HCT116 (cell line): ENCODE measurements at regions of chr1 and their contacts with region 1.

Region 1: DNA sequence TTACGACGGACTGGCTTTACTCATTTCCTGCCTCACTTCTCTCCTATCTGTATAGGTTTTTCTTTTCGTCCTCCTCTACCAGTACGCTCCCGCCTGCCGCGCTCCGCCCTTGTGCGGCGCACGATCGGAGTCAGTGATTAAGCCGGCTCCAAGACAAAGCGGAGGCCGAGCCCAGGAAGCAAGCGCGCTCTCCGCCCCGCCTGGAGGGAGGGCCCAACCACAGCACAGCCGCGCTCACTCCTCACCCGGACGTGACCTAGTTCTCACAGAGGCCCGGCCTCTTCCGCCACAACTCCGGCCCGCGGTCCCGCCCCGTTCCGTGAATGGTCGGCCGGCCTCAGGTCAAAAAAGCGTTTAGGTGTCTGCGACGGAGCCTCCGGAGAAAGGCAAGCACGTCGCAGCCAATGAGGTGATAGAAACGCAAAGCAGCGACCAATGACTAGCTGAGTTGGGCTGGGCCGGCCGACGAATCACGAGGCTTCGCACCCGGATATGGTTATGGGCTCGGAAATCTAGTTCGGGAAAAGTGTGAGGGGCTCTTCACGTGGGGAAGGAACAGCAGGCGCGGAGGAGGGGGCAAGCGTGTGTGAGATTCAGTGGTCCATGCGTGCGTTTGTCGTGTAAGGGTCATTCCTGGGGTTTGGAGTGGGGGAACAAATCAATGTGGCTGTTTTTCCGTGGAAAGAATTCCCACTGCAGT is at the start of gene METTL13:
- DNase-seq: peak; percentile 98
- ATAC-seq: peak; percentile 98
- H3K4me3 ChIP-seq: peak within 1 kb of the TSS; percentile 98
- H3K27ac ChIP-seq: peak within 1 kb of the TSS; percentile 73
- H3K4me1 ChIP-seq: peaks cover 5 to 18% of the 10 kb centered on the region in 2 experiments; a peak in 2 of 4 replicates
- H3K27me3 ChIP-seq: no peaks in the 10 kb centered on the region
- CTCF ChIP-seq: no peak
- POLR2A ChIP-seq: peak; percentile 70
- RAD21 ChIP-seq: no peak
- total RNA-seq, gene METTL13: 33.9 TPM

Region 2: GRCh38 chr1:171741872-171742576 is 39.3 kb before region 1 on chr1 and contains the start of gene VAMP4:
- CTCF ChIA-PET with region 1: no interaction called
- POLR2A ChIA-PET with region 1: interaction called, 3 read pairs
- RAD21 ChIA-PET with region 1: no interaction called
- intact Hi-C with region 1: loop called (anchors 5 kb)
- DNase-seq: peak; percentile 60
- ATAC-seq: peak; percentile 93
- H3K4me3 ChIP-seq: peak within 1 kb of the TSS; percentile 87 to 91
- H3K27ac ChIP-seq: peak within 1 kb of the TSS; percentile 82
- H3K4me1 ChIP-seq: peaks cover 4 to 27% of the 10 kb centered on the region in 2 experiments; a peak in 3 of 4 replicates
- H3K27me3 ChIP-seq: no peaks in the 10 kb centered on the region
- CTCF ChIP-seq: no peak
- POLR2A ChIP-seq: peak; percentile 81
- RAD21 ChIP-seq: no peak
- total RNA-seq, gene VAMP4: 6.3 TPM

Region 3: DNA sequence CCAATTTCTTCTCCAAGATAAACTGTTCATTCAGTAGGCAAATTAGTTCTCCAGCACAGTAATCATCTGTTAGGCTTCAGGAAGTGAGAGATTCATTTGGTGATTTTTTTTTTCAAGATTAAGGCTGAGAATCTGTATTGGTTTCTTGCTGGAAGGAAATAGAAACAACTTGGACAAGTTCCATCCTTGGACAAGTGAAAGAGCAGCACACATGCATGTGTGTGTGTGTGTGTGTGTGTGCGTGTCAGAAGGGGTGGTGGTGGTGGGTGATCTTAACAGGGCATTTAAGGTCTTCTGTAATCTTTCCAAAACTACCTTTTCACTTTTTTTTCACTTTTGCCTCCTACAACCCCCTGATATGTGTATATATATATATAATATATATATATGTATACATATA is 735.8 kb after region 1 on chr1:
- CTCF ChIA-PET with region 1: no interaction called
- POLR2A ChIA-PET with region 1: no interaction called
- RAD21 ChIA-PET with region 1: no interaction called
- intact Hi-C with region 1: no loop called
- DNase-seq: no peak
- ATAC-seq: no peak
- H3K4me3 ChIP-seq: no peak overlapping the region
- H3K27ac ChIP-seq: no peak overlapping the region
- H3K4me1 ChIP-seq: no peaks in the 10 kb centered on the region
- H3K27me3 ChIP-seq: no peaks in the 10 kb centered on the region
- CTCF ChIP-seq: no peak
- POLR2A ChIP-seq: no peak
- RAD21 ChIP-seq: no peak